BJ (cell line): ENCODE measurements at regions of chr3 and their contacts with region 1.

Region 1: DNA sequence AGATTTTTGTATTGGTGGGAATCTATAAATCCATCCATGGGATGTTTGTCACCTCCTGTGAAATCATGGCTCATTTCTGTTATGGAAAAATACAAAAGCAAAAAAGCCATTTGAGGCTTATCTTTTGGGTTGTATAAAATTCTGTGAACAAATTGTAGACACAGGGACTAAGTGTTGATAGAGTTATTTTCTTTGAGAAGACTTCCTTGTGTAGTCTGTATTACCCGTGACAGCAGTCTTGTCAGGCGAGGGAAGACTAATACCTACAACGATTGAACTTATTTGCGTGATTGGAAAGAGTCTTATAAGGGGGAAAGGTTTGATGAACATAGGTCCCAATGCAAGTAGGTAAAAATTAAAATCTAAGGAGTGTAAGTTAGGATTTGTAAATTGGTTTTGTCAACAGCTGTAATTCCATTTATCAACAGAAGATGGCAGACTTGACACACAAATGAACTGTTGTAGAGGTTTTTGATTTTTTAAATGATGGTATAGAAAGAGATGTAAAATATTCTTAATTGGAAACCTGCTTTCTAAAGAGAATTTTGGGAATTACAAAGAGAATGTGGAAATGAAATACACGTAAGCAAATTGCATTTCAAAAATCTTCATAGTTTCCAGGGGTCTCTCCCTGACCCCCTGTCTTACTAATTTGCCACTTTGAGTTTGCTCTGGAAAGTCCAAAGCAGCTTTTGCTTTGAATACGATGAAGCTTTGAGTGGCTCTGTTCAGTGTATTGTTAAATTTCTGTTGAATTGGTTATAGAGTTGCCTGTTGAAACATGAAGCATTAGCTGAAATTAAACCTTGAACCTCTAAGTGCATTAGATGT is 33.2 kb downstream of the SLC25A26 start:
- DNase-seq: no peak
- H3K4me3 ChIP-seq: no peak overlapping the region
- H3K27me3 ChIP-seq: no peaks in the 10 kb centered on the region
- CTCF ChIP-seq: peak; percentile 57

Region 2: DNA sequence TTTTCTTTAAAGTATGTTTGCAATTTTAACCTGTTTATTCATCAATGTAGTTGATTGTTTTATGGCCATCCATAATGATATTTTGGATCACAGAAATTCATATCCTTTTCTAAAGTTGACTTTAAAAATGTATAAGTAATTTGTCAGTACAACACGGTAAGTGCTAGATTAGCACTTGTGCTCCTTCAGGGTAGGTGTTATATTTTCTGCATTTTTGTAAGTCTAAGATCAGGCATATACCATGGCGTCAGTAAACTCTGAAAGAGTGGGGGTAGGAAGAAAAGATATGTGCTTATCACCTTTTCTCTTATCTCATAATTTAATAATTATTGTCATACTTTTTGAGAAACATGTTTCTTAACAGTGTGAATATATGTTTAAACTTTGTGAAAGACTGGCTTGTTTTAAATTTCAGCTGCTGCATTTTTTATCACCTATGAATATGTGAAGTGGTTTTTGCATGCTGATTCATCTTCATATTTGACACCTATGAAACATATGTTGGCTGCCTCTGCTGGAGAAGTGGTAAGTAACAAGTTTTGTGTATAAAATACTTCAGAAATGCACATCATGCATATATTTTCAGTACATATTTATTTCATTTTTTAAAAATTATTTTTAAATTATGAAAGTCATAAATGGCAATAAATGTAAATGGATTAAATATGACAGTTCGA is 11.1 kb before region 1 on chr3:
- CTCF ChIA-PET with region 1: interaction called, 11 read pairs
- POLR2A ChIA-PET with region 1: no interaction called
- DNase-seq: no peak
- H3K4me3 ChIP-seq: no peak overlapping the region
- H3K27me3 ChIP-seq: no peaks in the 10 kb centered on the region
- CTCF ChIP-seq: no peak

Region 3: GRCh38 chr3:66270701-66271100 is 16.7 kb after region 1 on chr3:
- CTCF ChIA-PET with region 1: interaction called, 27 read pairs
- POLR2A ChIA-PET with region 1: interaction called, 3 read pairs
- DNase-seq: no peak
- H3K4me3 ChIP-seq: no peak overlapping the region
- H3K27me3 ChIP-seq: no peaks in the 10 kb centered on the region
- CTCF ChIP-seq: no peak

Region 4: DNA sequence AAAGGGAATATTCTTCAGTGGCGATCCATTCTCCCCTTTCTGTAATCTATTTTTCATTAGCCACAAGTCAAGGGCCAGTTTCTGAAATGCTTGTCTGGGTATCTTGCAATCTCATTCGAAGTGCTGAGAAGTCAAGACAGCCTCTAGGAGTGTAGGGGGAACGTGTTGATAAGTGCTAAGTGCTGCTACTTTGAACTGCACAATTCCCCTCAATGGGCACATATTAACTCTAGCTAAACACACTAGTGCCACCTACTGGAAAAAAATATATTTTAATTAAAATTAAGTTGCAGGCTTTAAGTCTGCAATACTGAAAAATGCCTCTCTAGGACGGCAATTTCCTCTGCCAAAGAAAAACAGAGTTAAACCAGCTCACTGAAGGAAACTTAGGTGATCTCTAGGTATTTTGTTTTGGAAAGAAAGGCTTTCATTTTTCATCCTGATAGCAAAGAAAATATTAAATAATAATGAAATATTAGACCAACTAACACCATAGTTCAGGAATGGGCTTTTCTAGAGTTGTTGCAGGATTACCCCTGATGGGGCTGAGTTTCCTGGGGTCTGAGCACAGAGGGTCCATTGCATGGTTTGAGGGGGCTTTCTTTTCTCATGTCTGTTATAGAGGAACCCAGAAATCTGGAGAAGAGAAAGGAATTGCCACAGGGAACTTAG is 562.2 kb after region 1 on chr3:
- CTCF ChIA-PET with region 1: interaction called, 117 read pairs
- POLR2A ChIA-PET with region 1: no interaction called
- DNase-seq: no peak
- H3K4me3 ChIP-seq: no peak overlapping the region
- H3K27me3 ChIP-seq: peaks cover 2% of the 10 kb centered on the region
- CTCF ChIP-seq: peak; percentile 43

Region 5: DNA sequence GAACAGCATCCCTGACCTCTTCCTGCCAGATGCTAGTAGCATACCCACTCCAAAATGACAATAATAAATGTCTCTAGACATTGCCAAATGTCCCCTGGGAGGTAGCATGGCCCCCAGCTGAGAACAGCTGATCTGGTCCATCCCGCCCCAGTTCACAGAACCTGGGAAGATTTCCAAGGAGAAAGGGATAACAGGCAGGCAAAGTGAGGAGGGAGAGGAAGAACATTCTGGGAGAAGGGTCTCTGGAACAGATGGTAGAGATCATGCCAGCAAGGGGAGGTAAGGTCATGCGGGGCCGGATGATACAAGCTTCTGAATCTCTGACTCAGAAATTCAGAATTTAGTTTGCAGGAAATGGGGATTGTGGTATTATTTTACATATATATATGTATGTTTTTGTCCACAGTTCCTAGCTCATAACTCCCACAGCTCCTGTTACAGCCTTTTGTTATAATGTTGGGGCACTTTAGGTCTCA is 1207.7 kb after region 1 on chr3:
- CTCF ChIA-PET with region 1: no interaction called
- POLR2A ChIA-PET with region 1: no interaction called
- DNase-seq: no peak
- H3K4me3 ChIP-seq: no peak overlapping the region
- H3K27me3 ChIP-seq: no peaks in the 10 kb centered on the region
- CTCF ChIP-seq: no peak